Activated CD4-positive, alpha-beta T cell treated with anti-CD3 and anti-CD28 coated beads, Interleukin-2, amount 10 ng/mL, durations not matched to agents 24 days and 14 days (primary cell): ENCODE measurements at regions of chr3 and their contacts with region 1.

Region 1: DNA sequence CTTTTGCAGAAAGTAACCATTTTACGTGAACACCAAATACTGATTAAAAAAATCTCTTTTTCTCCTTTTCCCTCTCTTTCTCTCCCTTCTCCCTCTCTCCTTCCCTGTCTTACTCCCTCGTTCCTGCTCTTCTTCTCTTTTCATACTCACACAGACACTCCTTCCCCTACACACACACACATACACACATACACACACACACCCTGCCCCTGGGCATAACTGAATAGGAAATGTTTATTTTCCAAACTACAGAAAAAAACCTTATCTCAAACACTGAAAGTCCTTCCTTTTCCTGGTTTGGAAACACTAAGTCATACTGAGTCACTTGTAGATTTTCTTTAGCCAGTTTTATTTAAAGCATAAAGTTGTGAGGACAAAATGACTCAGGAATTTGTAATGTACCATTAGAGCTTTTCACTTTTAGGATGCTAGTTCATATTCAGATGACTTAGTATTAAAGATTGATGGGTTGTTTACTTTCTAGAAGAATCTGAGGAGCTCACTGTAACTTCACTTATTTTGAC is 62.4 kb downstream of the MBNL1 start:
- DNase-seq: no peak
- H3K4me3 Mint-ChIP-seq: peak overlapping the region; percentile 36
- H3K27ac Mint-ChIP-seq: peak overlapping the region; percentile 82
- H3K4me1 Mint-ChIP-seq: peaks cover 63% of the 10 kb centered on the region
- H3K27me3 Mint-ChIP-seq: no peaks in the 10 kb centered on the region

Region 2: DNA sequence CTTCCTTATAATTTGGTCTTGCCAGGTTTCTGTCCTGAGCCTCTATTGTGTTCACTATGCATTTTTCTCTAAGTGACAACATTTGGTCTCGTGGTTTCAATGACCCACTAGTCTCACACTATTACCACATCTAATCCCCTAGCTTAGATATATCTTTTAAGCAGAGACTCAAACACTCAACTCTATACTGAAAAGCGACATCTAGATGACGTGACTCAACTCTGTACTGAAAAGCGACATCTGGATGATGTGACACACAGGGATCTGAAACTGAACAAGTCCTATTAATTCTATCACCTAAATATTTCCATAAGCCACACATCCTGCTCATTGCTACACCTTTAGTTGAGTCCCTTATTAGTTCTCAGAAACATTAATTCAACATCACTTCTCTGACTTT is 204.0 kb before region 1 on chr3:
- intact Hi-C with region 1: loop called (anchors 5 kb)
- DNase-seq: peak; percentile 59
- H3K4me3 Mint-ChIP-seq: no peak overlapping the region
- H3K27ac Mint-ChIP-seq: no peak overlapping the region
- H3K4me1 Mint-ChIP-seq: peaks cover 10% of the 10 kb centered on the region
- H3K27me3 Mint-ChIP-seq: peaks cover 15% of the 10 kb centered on the region

Region 3: DNA sequence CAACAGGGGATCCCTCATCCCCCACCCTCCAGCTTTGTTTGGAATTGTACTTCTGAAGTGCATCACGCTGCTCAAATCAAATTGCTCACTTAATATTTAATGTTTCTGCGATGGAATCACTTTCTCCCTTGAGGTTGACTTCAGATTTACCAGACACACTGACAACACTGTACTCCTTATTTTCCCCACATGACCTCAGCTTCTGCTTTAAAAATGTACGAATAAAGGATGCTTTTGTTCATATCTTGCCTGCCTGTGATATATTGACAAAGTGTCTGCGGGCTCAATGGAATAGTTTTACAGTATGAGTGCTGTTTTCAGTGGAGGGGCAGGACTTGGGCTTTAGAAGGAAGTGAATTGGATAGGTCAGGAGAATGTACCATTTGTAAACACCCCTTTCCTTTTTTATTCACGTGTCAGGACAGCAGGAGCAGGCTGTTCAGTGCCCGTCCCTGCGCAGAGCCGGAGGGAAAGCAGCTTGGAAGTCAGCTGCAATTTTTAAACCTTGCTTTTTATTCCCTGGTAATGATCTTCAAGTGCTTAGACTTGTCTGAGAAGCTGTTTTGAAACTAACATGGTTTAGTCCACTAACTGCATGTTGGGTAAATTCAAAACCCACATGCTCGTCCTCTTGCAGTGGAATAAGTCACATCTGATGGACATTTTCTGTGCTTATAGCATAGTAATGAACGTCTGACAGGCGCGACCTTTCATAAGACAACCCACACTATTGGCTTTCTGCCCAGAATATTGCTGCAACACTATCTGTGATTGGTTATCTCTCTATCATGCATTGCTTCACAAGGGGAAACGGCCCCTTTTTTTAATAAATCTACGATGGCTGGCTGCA is 32.5 kb before region 1 on chr3:
- intact Hi-C with region 1: loop called (anchors 5 kb)
- DNase-seq: peak; percentile 83
- H3K4me3 Mint-ChIP-seq: peak overlapping the region; percentile 88
- H3K27ac Mint-ChIP-seq: peak overlapping the region; percentile 98
- H3K4me1 Mint-ChIP-seq: peaks cover 59% of the 10 kb centered on the region
- H3K27me3 Mint-ChIP-seq: no peaks in the 10 kb centered on the region

Region 4: GRCh38 chr3:152350139-152350538 is 19.1 kb after region 1 on chr3:
- intact Hi-C with region 1: loop called (anchors 2 kb)
- DNase-seq: no peak
- H3K4me3 Mint-ChIP-seq: no peak overlapping the region
- H3K27ac Mint-ChIP-seq: no peak overlapping the region
- H3K4me1 Mint-ChIP-seq: peaks cover 26% of the 10 kb centered on the region
- H3K27me3 Mint-ChIP-seq: no peaks in the 10 kb centered on the region

Region 5: DNA sequence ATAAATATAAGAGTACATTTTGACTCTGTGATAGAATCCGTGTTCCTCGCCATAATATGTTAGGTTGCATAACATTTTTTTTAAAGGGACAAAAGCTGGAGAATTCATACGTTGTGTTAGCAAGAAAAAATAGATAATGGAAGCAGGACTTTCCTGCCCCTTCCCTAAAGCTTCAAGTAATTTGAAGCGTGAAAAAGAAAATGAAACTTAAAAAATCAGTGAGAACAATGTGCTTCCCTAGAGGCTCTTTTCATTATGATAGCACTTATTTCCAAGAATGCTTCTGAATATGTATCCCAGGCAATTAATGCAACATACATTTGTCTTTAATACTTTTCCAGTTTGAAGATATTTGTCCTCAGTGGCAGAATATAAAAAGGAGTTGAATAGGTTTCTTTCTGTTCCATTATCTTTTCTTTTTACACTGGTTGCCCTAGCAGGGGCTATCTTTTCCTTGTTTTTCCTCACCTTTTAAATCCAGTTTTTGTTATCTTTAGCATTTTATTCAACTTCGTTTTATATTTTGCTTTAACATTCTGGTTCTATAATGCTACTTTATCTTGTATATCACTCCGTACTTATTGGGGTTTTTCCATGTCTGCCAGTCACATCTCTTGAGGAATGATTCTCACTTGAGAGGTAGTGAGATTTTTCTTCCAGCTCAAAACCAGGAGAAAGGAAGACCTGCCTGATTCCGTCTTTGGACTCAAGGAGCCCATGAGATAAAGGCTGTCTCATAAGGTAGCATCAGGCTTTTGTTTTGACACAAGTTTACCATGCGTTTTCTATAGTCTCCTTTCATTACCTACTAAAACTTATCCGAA is 51.4 kb after region 1 on chr3:
- intact Hi-C with region 1: loop called (anchors 5 kb)
- DNase-seq: no peak
- H3K4me3 Mint-ChIP-seq: peak overlapping the region; percentile 78
- H3K27ac Mint-ChIP-seq: peak overlapping the region; percentile 87
- H3K4me1 Mint-ChIP-seq: peaks cover 33% of the 10 kb centered on the region
- H3K27me3 Mint-ChIP-seq: no peaks in the 10 kb centered on the region

Region 6: DNA sequence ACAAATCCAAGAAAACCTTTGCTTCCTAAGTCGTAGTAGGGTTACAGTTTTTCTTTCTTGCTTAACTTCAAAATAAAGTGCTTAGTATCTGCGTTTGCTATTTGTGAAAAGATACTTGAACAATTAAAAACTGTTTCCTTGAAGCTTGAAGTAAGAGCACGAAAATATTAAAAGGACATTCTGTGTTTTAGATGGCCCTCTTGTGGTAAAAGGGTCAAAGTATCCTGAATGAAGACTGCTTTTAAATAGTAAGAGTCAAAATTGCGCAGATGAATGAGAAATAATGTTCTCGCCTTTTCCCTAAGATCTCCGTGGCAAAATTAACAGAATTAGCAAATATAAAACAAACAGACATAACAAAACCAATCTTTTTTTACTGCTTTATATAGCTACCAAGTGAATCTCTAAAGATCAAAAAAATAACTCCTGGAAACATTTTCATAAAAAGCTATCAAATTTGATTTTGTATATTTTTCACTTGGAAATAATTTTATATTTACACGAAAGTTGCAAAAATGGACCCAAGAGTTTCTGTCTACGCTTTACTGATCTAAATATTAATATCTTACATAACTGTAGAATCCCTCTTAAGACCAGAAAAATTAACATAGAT is 113.1 kb after region 1 on chr3:
- intact Hi-C with region 1: loop called (anchors 5 kb)
- DNase-seq: no peak
- H3K4me3 Mint-ChIP-seq: no peak overlapping the region
- H3K27ac Mint-ChIP-seq: peak overlapping the region; percentile 5
- H3K4me1 Mint-ChIP-seq: peaks cover 41% of the 10 kb centered on the region
- H3K27me3 Mint-ChIP-seq: no peaks in the 10 kb centered on the region

Region 7: GRCh38 chr3:152729906-152730305 is 398.8 kb after region 1 on chr3:
- intact Hi-C with region 1: no loop called
- DNase-seq: no peak
- H3K4me3 Mint-ChIP-seq: no peak overlapping the region
- H3K27ac Mint-ChIP-seq: no peak overlapping the region
- H3K4me1 Mint-ChIP-seq: no peaks in the 10 kb centered on the region
- H3K27me3 Mint-ChIP-seq: peaks cover 3% of the 10 kb centered on the region